ENCODE measurements at regions of chr14 and their contacts with region 1.

Region 1: DNA sequence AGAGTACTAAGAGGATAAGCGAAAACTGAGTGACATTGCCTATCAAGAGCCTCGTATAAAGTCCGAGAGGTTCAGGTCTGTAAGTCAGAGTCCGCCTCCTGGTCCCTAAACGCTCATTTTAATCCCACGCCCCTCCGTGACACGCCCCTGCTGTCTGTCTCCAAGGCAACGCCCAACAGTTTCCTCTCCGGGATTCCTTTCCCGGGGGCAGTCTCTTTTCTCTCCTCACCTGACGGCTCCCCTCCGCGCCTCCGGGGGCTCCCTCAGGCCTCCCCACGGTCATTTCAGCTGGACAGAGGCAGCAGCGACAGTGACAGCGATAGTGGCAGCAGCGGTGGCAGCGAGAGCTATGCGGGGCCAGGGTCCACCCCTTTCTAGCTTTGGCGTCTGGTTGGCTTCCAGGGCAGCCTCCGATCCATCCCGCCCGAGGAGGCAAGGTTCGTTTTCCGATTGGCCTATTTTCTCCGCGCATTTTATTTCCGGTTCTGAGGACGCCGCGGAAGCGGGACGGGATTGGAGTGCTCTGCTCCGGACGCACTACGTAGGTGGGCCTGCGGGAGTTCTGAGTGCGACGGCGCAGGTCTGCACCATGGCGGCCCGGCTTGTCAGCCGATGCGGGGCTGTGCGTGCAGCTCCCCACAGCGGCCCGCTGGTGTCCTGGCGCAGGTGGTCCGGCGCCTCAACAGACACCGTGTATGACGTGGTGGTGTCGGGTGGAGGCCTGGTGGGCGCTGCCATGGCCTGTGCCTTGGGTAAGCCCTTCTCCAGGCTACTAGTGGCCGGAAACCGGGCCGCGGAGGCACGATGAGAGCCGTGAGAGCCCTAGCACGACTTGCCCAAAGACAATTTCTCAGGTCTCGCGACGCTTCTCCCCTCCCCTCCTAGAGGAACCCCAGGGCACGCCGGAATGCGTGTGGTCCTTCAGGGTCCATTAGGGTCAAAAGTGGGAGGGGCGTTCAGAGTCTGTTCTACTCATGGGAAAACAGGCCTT is at the starts of genes COQ6 and FAM161B:
- DNase-seq: peak; percentile 96
- H3K4me3 Mint-ChIP-seq: peak within 1 kb of the TSS; percentile 97
- H3K27ac Mint-ChIP-seq: peak within 1 kb of the TSS; percentile 86
- H3K4me1 Mint-ChIP-seq: peaks cover 17% of the 10 kb centered on the region
- H3K27me3 Mint-ChIP-seq: no peaks in the 10 kb centered on the region
- total RNA-seq, gene COQ6: 18.7 to 19.3 TPM
- total RNA-seq, gene FAM161B: 1.1 to 1.4 TPM

Region 2: DNA sequence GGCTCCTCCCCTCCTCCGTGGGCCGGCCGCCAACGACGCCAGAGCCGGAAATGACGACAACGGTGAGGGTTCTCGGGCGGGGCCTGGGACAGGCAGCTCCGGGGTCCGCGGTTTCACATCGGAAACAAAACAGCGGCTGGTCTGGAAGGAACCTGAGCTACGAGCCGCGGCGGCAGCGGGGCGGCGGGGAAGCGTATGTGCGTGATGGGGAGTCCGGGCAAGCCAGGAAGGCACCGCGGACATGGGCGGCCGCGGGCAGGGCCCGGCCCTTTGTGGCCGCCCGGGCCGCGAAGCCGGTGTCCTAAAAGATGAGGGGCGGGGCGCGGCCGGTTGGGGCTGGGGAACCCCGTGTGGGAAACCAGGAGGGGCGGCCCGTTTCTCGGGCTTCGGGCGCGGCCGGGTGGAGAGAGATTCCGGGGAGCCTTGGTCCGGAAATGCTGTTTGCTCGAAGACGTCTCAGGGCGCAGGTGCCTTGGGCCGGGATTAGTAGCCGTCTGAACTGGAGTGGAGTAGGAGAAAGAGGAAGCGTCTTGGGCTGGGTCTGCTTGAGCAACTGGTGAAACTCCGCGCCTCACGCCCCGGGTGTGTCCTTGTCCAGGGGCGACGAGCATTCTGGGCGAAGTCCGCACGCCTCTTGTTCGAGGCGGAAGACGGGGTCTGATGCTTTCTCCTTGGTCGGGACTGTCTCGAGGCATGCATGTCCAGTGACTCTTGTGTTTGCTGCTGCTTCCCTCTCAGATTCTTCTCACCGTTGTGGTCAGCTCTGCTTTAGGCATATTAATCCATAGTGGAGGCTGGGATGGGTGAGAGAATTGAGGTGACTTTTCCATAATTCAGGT is 813.4 kb before region 1 on chr14 and contains the start of gene PSEN1:
- CTCF ChIA-PET with region 1: no interaction called
- POLR2A ChIA-PET with region 1: no interaction called
- intact Hi-C with region 1: loop called (anchors 1 kb)
- DNase-seq: peak; percentile 98
- H3K4me3 Mint-ChIP-seq: peak within 1 kb of the TSS; percentile 93
- H3K27ac Mint-ChIP-seq: peak within 1 kb of the TSS; percentile 97
- H3K4me1 Mint-ChIP-seq: peaks cover 25% of the 10 kb centered on the region
- H3K27me3 Mint-ChIP-seq: no peaks in the 10 kb centered on the region
- total RNA-seq, gene PSEN1: 30.3 to 31.6 TPM

Region 3: DNA sequence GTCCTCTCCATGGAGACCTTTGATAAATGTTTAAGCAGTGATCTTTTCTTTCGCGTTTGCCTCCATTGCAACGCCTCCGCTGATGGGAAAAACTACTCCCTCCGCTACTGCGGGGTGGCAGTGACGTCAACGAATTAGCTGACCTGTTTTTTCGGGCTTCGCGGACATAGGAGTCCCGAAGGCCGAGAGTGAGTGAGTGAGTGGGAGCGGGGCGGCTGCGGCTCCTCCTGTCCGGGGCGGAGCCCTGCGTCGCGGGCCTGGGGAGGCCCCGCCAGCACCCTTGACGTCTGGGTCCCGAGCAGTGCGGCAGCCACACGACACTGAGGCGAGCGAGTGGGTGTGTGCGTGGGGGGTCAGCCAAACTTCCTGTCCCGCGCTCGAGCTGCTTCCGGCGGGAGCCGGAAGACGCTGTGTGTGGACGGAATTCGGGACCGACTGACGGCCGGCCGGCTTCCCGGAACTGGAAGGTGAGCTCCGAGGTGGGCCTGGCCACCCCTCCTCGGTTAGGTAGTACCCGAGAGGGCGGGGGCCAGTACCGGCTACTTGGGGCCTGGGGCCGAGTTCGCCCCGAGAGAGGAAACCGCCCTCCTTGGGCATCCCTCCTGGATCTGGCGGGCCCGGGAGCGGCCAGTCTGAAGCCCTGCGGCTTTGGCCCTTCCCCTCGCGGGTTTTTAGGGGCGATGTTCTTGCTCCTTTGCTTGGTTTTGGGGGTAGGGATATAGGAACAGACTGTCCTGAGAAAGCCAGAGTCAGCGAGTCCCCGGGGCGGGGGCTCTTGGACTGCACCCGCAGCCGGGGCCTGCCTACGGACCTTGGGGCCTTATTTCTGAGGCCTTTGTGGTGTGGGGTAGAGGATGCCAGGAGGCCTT is 63.4 kb before region 1 on chr14 and contains the start of gene ZNF410:
- CTCF ChIA-PET with region 1: no interaction called
- POLR2A ChIA-PET with region 1: interaction called, 4 read pairs
- intact Hi-C with region 1: loop called (anchors 1 kb)
- DNase-seq: peak; percentile 97
- H3K4me3 Mint-ChIP-seq: peak within 1 kb of the TSS; percentile 93
- H3K27ac Mint-ChIP-seq: peak within 1 kb of the TSS; percentile 95
- H3K4me1 Mint-ChIP-seq: peaks cover 47% of the 10 kb centered on the region
- H3K27me3 Mint-ChIP-seq: no peaks in the 10 kb centered on the region
- total RNA-seq, gene ZNF410: 65.2 to 68.7 TPM

Region 4: DNA sequence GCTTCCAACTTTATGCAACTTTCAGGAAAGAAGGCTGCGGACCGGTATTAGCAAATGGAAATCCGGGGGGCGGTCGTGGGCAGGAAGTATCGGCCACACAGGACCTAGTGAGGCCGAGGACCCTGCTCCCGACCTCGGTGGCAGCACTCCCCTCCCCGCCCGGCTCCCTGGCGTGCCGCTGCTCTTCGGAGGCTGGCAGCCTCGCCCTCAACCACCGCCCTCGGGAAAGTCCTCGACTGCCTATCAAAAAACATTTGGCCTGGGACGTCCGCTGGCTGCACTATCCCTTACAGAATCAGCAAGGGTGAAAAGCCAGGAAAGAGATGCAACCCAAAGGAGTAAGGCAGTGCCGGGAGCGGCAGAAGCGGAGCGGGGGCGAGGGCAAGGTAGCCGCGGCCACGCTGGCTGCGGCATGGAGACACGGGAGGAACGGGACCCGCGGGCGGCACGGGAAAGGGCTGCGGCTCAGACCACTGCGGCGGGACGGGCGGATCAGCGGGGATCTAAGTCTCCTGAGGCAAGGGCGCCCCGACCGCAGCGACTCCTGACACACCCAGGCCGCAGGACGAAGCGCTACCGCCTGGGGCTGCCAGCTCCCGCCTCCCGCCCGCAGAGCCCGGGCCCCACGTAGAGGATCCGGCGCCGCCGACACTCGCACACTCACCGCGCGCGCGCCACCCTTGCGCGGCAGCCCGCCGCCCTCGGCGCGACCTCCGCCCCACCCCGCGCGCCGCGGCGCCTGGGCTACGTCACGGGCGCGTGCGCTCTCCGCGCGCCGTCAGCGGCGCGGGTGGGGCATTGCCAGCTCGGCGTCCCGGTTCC is 68.8 kb after region 1 on chr14 and contains the starts of genes BBOF1 and ENTPD5:
- CTCF ChIA-PET with region 1: no interaction called
- POLR2A ChIA-PET with region 1: no interaction called
- intact Hi-C with region 1: loop called (anchors 1 kb)
- DNase-seq: peak; percentile 87
- H3K4me3 Mint-ChIP-seq: peak within 1 kb of the TSS; percentile 95
- H3K27ac Mint-ChIP-seq: peak within 1 kb of the TSS; percentile 89
- H3K4me1 Mint-ChIP-seq: peaks cover 5% of the 10 kb centered on the region
- H3K27me3 Mint-ChIP-seq: no peaks in the 10 kb centered on the region
- total RNA-seq, gene BBOF1: 1.0 to 1.3 TPM
- total RNA-seq, gene ENTPD5: 10.2 to 11.2 TPM

Region 5: GRCh38 chr14:74038015-74038859 is 88.2 kb after region 1 on chr14:
- CTCF ChIA-PET with region 1: no interaction called
- POLR2A ChIA-PET with region 1: no interaction called
- intact Hi-C with region 1: loop called (anchors 5 kb)
- DNase-seq: no peak
- H3K4me3 Mint-ChIP-seq: no peak overlapping the region
- H3K27ac Mint-ChIP-seq: no peak overlapping the region
- H3K4me1 Mint-ChIP-seq: no peaks in the 10 kb centered on the region
- H3K27me3 Mint-ChIP-seq: no peaks in the 10 kb centered on the region